ENCODE measurements at regions of chr10 and their contacts with region 1.

Region 1: GRCh38 chr10:24718031-24718855 is 5.4 kb downstream of the ARHGAP21 start:
- DNase-seq: no peak
- H3K4me3 Mint-ChIP-seq: no peak overlapping the region
- H3K27ac Mint-ChIP-seq: no peak overlapping the region
- H3K4me1 Mint-ChIP-seq: peaks cover 2% of the 10 kb centered on the region
- H3K27me3 Mint-ChIP-seq: no peaks in the 10 kb centered on the region
- CTCF ChIP-seq: no peak

Region 2: GRCh38 chr10:24822590-24822989 is 104.3 kb after region 1 on chr10:
- CTCF ChIA-PET with region 1: no interaction called
- intact Hi-C with region 1: loop called (anchors 5 kb)
- DNase-seq: no peak
- H3K4me3 Mint-ChIP-seq: no peak overlapping the region
- H3K27ac Mint-ChIP-seq: no peak overlapping the region
- H3K4me1 Mint-ChIP-seq: peaks cover 26% of the 10 kb centered on the region
- H3K27me3 Mint-ChIP-seq: no peaks in the 10 kb centered on the region
- CTCF ChIP-seq: no peak

Region 3: DNA sequence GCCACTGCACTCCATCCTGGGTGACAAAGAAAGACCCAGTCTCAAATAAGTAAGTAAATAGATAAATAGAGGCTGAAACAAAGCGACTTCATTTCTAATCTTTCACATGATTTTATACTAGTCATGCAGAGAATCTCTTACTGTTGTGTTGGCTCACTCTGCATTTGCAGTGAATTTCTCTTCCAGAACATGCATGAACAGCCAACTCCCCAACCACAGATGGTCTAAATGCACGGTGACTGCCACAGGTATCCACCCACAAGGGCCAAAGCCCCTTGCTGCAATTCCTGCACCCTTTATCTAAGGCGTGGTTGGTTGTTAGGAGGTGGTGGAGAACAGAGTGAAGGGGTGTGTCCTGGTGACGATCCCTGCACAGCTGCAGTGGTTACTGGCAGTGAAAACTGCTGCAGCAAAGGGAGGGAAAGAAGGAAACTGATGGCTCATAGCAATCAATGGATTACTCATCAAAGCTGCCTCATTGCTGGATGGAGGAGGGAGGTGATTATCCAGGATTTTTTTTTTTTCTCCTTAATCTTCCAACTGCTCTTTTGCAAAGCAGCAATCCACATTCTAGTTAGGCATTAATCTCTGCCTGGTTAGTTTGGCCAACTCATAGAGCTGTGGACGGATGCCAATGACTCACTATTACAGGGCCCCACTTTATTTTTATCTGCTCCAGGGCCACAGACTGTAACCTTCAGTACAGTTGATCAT is 183.6 kb after region 1 on chr10:
- CTCF ChIA-PET with region 1: no interaction called
- intact Hi-C with region 1: loop called (anchors 5 kb)
- DNase-seq: peak; percentile 73
- H3K4me3 Mint-ChIP-seq: peak overlapping the region; percentile 55
- H3K27ac Mint-ChIP-seq: peak overlapping the region; percentile 78
- H3K4me1 Mint-ChIP-seq: peaks cover 36% of the 10 kb centered on the region
- H3K27me3 Mint-ChIP-seq: no peaks in the 10 kb centered on the region
- CTCF ChIP-seq: no peak

Region 4: DNA sequence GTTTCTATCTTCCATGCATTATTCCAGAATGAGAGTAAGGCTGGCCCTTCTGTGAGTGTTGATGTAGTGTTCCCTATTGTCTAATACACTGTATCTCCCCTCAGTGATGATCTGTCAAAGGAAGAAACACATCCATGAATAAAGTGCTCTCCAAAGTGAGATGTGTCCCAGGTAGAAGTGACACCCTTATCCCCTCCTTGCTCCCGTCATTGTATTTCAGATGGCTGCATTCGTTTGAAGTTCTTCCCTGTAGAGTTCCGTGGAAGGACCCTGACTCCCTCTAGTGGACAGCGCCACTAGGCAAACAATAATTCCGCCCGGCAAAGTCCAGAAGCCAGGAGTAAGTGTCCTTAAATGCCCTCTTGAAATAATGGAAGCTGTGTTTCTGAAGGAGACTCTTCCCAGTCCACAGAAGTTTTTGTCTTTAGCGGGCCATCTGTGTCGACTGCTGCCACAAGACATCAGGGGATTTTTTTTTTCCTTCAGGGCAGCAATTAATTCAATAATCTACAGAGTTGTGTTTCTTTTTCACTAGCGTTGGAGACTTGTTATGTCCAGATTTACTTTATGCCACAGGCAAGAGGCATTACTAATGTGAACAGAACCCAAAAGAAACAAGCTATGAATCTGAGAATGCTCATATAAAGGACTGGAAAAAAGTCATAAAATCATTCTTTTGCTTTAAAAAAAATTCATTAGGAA is 362.8 kb after region 1 on chr10:
- CTCF ChIA-PET with region 1: no interaction called
- intact Hi-C with region 1: loop called (anchors 10 kb)
- DNase-seq: peak; percentile 87
- H3K4me3 Mint-ChIP-seq: no peak overlapping the region
- H3K27ac Mint-ChIP-seq: no peak overlapping the region
- H3K4me1 Mint-ChIP-seq: peaks cover 25% of the 10 kb centered on the region
- H3K27me3 Mint-ChIP-seq: no peaks in the 10 kb centered on the region
- CTCF ChIP-seq: peak; percentile 82